ENCODE measurements at regions of chr12 and their contacts with region 1.

Region 1: GRCh38 chr12:89040146-89040964 is 311.9 kb downstream of the DUSP6 start:
- DNase-seq: peak; percentile 94
- H3K4me3 Mint-ChIP-seq: peak overlapping the region; percentile 72
- H3K27ac Mint-ChIP-seq: peak overlapping the region; percentile 93
- H3K4me1 Mint-ChIP-seq: peaks cover 58% of the 10 kb centered on the region
- H3K27me3 Mint-ChIP-seq: no peaks in the 10 kb centered on the region

Region 2: DNA sequence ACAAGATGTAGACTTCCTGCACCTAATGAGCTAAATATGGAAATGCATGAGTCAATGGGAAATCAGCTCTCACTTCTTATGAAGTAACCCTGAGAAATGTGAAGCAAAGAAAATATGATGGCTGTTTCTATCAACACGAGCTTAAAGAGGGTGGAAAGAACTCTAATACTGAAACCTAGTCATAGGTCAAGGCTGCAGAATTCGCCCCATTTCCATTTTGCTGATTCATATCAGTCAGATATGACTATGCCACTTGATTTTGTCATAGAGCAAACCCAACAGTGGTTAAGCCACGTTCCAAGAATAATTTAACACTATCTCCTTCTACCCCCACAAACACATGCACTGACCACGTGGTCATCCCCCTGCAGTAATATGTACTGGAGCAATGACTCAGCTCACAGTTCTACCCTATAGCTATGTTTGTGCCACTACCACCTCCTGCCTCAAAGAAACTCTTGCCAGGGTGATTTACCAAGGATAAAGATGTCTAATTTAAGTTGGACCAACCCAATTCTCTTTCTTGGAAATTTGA is 740.7 kb before region 1 on chr12:
- intact Hi-C with region 1: loop called (anchors 1 kb)
- DNase-seq: peak; percentile 75
- H3K4me3 Mint-ChIP-seq: peak overlapping the region; percentile 52
- H3K27ac Mint-ChIP-seq: peak overlapping the region; percentile 87
- H3K4me1 Mint-ChIP-seq: peaks cover 26% of the 10 kb centered on the region
- H3K27me3 Mint-ChIP-seq: no peaks in the 10 kb centered on the region

Region 3: DNA sequence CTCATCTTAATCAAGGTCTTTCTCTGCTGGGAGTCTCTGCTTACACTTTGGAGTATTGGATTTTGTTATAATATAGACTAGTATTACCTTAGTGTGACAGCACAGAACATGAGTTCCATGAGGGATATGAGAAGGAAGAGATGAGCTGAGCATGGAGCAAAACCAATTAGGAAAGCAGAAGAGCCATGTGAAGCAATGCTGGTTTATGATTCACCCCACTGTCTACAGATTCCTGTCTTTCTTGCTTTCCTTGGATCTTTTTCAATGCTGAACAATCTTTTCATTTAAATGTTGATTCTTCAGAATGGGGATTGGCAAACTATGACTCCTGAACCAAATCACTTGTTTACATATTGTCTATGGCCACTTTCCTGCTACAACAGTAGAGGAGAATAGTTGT is 389.6 kb before region 1 on chr12:
- intact Hi-C with region 1: no loop called
- DNase-seq: no peak
- H3K4me3 Mint-ChIP-seq: no peak overlapping the region
- H3K27ac Mint-ChIP-seq: no peak overlapping the region
- H3K4me1 Mint-ChIP-seq: no peaks in the 10 kb centered on the region
- H3K27me3 Mint-ChIP-seq: no peaks in the 10 kb centered on the region

Region 4: DNA sequence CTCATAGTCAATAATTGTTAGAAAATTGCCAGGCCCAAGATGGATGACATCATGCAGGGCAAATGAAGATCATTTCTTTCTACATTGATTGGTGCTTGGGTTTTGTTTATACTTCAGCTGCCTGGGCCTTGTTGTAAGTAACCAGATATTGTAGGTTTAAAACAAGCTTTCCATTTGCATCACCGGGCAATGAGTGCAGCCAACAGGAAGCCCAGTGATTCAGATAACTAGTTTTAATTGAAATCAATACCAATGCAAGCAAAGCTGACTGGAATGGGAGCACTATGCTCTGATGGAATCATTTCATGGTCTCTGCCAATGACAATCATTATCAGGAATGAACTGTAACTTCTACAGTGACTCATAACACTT is 32.7 kb after region 1 on chr12:
- intact Hi-C with region 1: loop called (anchors 1 kb)
- DNase-seq: no peak
- H3K4me3 Mint-ChIP-seq: no peak overlapping the region
- H3K27ac Mint-ChIP-seq: peak overlapping the region; percentile 31
- H3K4me1 Mint-ChIP-seq: peaks cover 20% of the 10 kb centered on the region
- H3K27me3 Mint-ChIP-seq: no peaks in the 10 kb centered on the region

Region 5: DNA sequence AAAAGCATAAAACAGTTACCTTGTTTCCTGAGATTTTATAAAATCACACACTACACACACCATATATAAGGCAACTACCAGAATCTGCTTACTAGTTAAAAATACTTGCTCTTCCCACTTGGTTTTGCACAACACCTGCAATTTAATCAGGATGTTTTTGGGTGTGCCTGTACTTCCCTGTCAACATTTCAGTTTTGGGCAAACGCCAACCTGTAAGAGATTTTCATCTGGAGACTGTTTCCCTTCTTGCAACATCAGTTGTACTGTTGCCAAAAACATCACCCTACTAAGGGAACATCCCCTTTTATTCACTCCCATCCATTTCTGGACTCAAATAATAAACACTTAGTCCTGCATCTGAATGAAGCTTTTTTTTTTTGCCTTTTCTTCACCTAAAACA is 139.6 kb after region 1 on chr12:
- intact Hi-C with region 1: loop called (anchors 1 kb)
- DNase-seq: no peak
- H3K4me3 Mint-ChIP-seq: peak overlapping the region; percentile 38
- H3K27ac Mint-ChIP-seq: peak overlapping the region; percentile 81
- H3K4me1 Mint-ChIP-seq: peaks cover 51% of the 10 kb centered on the region
- H3K27me3 Mint-ChIP-seq: no peaks in the 10 kb centered on the region

Region 6: GRCh38 chr12:89389755-89390661 is 349.7 kb after region 1 on chr12:
- intact Hi-C with region 1: loop called (anchors 1 kb)
- DNase-seq: no peak
- H3K4me3 Mint-ChIP-seq: no peak overlapping the region
- H3K27ac Mint-ChIP-seq: peak overlapping the region; percentile 67
- H3K4me1 Mint-ChIP-seq: peaks cover 26% of the 10 kb centered on the region
- H3K27me3 Mint-ChIP-seq: no peaks in the 10 kb centered on the region

Region 7: GRCh38 chr12:89494411-89495231 is 454.3 kb after region 1 on chr12:
- intact Hi-C with region 1: loop called (anchors 1 kb)
- DNase-seq: peak; percentile 72
- H3K4me3 Mint-ChIP-seq: peak overlapping the region; percentile 44
- H3K27ac Mint-ChIP-seq: peak overlapping the region; percentile 96
- H3K4me1 Mint-ChIP-seq: peaks cover 14% of the 10 kb centered on the region
- H3K27me3 Mint-ChIP-seq: no peaks in the 10 kb centered on the region

Region 8: DNA sequence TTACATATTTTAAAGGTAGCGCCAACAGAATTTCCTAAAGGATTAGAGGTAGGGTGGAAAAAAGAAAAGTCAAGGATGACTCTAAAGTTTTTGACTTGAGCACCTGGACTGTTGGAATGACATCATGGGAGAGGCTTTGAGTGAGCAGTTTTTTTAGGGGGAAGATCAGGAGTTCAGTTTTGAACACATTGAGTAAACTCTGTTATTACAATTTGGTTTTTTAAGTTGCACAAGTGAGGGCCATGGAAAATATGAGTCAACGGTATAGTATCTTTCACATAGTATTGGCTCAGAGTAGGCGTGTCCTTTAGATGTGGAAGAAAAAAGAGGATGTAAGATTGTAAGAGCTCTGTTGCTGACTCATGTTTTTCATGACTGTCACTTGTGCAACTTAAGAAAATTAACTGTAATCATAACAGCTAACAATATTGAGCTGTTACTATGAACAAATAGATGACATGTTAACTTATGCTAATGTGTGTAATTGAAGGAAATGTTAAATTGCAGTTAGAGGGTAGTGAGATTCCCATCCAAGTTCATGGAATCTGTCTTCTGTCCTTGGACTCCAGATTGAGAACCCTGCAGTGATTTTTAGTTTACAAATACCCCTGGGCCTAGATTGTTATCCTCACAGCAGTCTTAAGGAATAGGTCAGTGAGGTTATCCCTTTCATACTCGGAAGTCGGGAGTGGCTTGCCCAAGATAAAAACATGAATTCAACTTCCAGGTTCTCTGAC is 716.4 kb after region 1 on chr12:
- intact Hi-C with region 1: loop called (anchors 1 kb)
- DNase-seq: peak; percentile 78
- H3K4me3 Mint-ChIP-seq: peak overlapping the region; percentile 10
- H3K27ac Mint-ChIP-seq: peak overlapping the region; percentile 77
- H3K4me1 Mint-ChIP-seq: peaks cover 22% of the 10 kb centered on the region
- H3K27me3 Mint-ChIP-seq: peaks cover 2% of the 10 kb centered on the region

Measured in activated CD4-positive, alpha-beta T cell treated with anti-CD3 and anti-CD28 coated beads, Interleukin-2, amount 10 ng/mL, durations not matched to agents 24 days and 14 days (primary cell).